HEK293T (cell line): ENCODE measurements at regions of chr6 and their contacts with region 1.

Region 1: DNA sequence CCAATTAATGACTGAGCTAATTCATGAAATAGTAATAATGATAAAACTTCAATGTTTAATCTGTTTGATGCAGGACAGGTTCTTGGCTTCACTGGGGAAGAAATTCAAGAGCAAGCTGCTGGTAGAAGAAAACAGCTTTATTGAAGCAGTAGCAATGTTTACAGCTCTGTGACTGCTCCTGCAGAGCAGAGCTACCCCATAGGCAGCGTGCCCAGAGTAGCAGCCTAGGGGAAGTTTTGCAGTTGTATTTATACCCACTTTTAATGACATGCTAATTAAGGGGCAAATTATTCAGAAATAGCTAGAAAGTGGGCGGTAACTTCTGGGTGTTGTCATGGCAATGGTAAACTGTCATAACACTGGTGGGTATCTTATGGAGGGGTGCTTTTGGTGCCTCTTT is 518.0 kb downstream of the RFPL4B start:
- DNase-seq: no peak

Region 2: GRCh38 chr6:112690497-112691202 is 174.5 kb before region 1 on chr6:
- CTCF ChIA-PET with region 1: no interaction called
- POLR2A ChIA-PET with region 1: no interaction called
- DNase-seq: no peak

Region 3: GRCh38 chr6:112827793-112828192 is 37.3 kb before region 1 on chr6:
- CTCF ChIA-PET with region 1: no interaction called
- POLR2A ChIA-PET with region 1: no interaction called
- DNase-seq: no peak

Region 4: GRCh38 chr6:112979830-112980229 is 114.7 kb after region 1 on chr6:
- CTCF ChIA-PET with region 1: interaction called, 12 read pairs
- POLR2A ChIA-PET with region 1: no interaction called
- DNase-seq: peak; percentile 22

Region 5: DNA sequence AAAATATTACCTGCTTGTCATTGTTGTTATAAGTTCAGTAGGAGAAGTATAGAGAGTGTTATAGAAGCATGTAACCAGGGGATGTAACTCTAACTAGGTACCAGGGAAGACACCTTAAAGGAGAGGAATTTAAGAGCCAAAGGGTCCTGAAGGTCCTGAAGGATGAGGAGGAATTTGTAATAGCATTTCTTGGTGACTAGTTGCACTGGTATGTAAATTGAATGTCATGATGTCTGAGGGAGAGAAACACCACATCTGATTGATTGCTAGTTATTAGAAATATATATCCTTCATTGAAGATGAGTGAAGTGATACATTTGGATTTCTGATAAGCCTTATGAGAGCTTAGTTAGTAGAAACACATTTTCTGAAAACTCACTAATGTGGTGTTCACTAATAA is 125.9 kb after region 1 on chr6:
- CTCF ChIA-PET with region 1: no interaction called
- POLR2A ChIA-PET with region 1: no interaction called
- DNase-seq: no peak

Region 6: DNA sequence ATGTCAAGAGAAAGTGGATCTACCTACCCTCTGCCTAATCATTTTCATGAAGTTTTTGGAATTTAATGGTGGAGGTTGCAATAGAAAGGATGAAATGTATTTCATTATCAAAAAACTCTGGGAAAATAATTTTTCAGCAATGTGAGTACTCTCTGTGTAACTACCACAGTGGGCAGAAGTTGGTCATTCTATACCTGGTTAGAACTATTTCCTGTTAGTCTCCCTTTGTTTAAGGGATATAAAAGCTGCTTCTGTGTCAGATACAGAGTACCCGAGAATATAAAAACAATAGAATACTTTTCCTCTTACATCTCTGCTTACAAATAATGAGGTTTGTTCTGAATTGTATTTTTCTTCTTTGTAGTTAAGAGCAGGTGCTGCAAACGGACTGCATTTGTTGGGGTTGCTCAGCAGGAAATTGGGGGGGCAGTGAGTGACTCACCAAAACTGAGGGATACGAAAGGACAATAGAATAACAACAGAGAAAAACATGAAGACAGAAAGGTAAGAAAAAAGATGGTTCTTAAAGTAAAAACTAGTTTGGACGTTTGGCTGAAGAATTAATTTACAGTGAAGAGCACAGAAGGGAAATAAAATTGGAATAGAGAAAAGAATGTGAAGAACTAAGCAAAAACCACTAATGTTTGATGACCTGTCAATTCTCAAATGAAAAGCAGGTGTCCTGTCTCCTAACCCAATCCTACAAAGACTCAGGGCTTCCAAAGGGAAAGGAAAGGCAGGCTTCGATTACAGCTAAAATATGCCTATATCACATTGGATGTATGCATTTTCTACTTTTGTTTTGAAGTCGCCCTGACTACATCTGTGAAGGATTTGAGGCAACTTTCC is 185.1 kb after region 1 on chr6:
- CTCF ChIA-PET with region 1: no interaction called
- POLR2A ChIA-PET with region 1: no interaction called
- DNase-seq: no peak